Heart right ventricle (tissue), 16 donors: ENCODE measurements at regions of chr9 and their contacts with region 1.

Region 1: GRCh38 chr9:90914868-90915483 is 113.4 kb downstream of the SYK start:
- DNase-seq: peak; percentile 62 to 66
- ATAC-seq: peak; percentile 79 to 95 (median 87)
- H3K4me3 ChIP-seq: no peak overlapping the region
- H3K27ac ChIP-seq: no peak overlapping the region
- H3K4me1 ChIP-seq: peaks cover 0 to 5% (median 1%) of the 10 kb centered on the region in 9 donors
- H3K27me3 ChIP-seq: peaks cover 0 to 13% (median 0%) of the 10 kb centered on the region in 7 donors
- CTCF ChIP-seq: peak; percentile 81 to 92 (median 92)

Region 2: GRCh38 chr9:91433180-91433579 is 518.2 kb after region 1 on chr9:
- intact Hi-C with region 1: loop called (anchors 1 to 10 kb)
- DNase-seq: no peak
- ATAC-seq: peak in 6 of 8 donors; percentile 62 to 74 (median 68)
- H3K4me3 ChIP-seq: no peak overlapping the region
- H3K27ac ChIP-seq: no peak overlapping the region
- H3K4me1 ChIP-seq: peaks cover 0 to 20% (median 0%) of the 10 kb centered on the region in 9 donors
- H3K27me3 ChIP-seq: no peaks in the 10 kb centered on the region
- CTCF ChIP-seq: peak in 8 of 9 donors; percentile 19 to 70 (median 58)

Region 3: DNA sequence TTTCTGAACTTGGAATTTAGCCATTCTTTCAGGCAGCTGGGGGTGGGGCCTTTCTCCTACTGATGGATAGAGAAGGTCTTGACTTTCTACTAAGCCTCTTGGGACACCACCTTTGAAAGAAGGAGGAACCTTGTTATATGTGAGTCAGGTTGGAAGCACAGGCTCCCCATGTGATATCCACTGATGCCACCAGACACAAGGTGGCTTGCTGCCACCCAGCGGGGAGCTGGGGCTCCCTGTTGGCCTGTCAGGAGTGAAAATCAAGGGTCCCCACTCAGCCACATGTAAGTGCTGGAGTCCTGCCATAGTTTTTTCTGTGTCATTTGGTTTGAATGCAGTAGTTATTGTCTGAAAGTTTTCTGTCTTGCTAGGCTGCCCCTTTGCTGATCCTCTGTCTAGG is 761.1 kb after region 1 on chr9:
- intact Hi-C with region 1: loop called (anchors 2 to 10 kb)
- DNase-seq: no peak
- ATAC-seq: peak in 2 of 8 donors; percentile 35 to 52
- H3K4me3 ChIP-seq: no peak overlapping the region
- H3K27ac ChIP-seq: no peak overlapping the region
- H3K4me1 ChIP-seq: no peaks in the 10 kb centered on the region
- H3K27me3 ChIP-seq: peaks cover 0 to 5% (median under 1%) of the 10 kb centered on the region in 7 donors
- CTCF ChIP-seq: peak in 5 of 9 donors; percentile 17 to 44 (median 36)

Region 4: DNA sequence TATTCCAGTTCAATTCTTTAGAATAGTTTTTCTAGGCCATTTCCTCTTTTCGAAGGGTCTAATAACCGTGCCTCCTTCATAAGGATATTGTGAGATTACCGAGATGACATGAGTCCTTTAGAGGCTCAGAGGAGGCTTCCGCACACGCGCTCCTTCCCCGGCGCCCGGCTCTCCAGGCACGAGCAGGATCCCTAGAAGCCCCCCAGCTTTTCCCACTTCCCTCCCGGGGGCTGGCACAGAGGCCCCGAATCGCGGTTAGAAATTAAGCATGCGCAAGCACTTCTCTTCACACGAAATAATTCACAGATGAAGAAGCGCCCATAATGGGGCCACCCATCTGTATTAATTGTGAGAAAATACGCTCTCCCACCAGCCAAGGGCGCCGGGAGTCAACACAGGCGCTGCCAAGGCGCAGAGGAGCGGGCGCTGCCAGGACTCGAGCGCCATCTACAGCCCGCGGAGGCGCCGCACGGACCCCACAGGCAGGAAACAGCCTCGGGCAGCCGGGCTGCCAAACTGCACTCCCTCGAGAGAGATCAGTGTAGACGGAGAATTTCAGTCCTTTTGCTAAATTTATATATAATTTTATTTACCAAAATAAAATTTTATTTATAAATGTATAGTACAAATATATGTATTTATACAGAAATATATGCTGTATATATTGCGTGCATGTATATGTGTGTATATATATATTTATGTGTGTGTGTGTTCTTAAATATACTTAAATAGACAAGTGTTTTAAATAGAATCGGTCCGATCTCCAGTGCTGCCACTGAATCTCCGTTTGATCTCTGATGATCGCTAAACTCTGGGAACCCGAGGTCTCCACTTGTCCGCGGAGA is 766.7 kb after region 1 on chr9:
- intact Hi-C with region 1: loop called (anchors 2 to 10 kb)
- DNase-seq: peak; percentile 68 to 81
- ATAC-seq: peak; percentile 90 to 97 (median 95)
- H3K4me3 ChIP-seq: peak overlapping the region in 4 of 10 donors; percentile 6 to 30 (median 24)
- H3K27ac ChIP-seq: no peak overlapping the region
- H3K4me1 ChIP-seq: peaks cover 0 to 9% (median 0%) of the 10 kb centered on the region in 9 donors
- H3K27me3 ChIP-seq: peaks cover 0 to 21% (median 3%) of the 10 kb centered on the region in 7 donors
- CTCF ChIP-seq: peak; percentile 64 to 94 (median 87)

Region 5: GRCh38 chr9:91727316-91727861 is 812.4 kb after region 1 on chr9:
- intact Hi-C with region 1: loop called in 9 of 10 experiments (anchors 2 to 10 kb)
- DNase-seq: no peak
- ATAC-seq: peak; percentile 43 to 74 (median 60)
- H3K4me3 ChIP-seq: no peak overlapping the region
- H3K27ac ChIP-seq: peak overlapping the region in 4 of 10 donors; percentile 17 to 42 (median 32)
- H3K4me1 ChIP-seq: peaks cover 0 to 9% (median 0%) of the 10 kb centered on the region in 9 donors
- H3K27me3 ChIP-seq: no peaks in the 10 kb centered on the region
- CTCF ChIP-seq: peak; percentile 40 to 74 (median 70)

Region 6: GRCh38 chr9:91734371-91734981 is 819.5 kb after region 1 on chr9:
- intact Hi-C with region 1: loop called in 7 of 10 experiments (anchors 5 to 10 kb)
- DNase-seq: peak; percentile 61 to 77
- ATAC-seq: peak; percentile 35 to 74 (median 64)
- H3K4me3 ChIP-seq: no peak overlapping the region
- H3K27ac ChIP-seq: no peak overlapping the region
- H3K4me1 ChIP-seq: peaks cover 0 to 6% (median 0%) of the 10 kb centered on the region in 9 donors
- H3K27me3 ChIP-seq: peaks cover 0 to 4% (median 0%) of the 10 kb centered on the region in 7 donors
- CTCF ChIP-seq: peak; percentile 86 to 98 (median 95)